Left ventricle myocardium superior (tissue), 1 donor: ENCODE measurements at regions of chr4 and their contacts with region 1.

Region 1: DNA sequence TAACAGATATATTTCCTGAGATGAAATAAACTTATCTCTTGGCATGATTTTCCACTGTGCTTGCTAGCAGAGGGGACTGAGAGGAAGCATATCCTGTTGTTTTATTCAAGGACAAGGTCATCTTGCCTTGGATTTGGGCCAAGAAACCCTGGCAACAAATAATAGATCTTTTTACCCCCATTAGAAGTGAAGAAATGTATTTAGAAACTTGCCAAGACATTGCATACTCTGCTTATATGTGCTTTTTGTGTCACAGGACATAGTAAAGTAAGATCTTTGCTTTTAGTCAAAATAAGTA is 170.2 kb downstream of the RAPGEF2 start:
- DNase-seq: no peak
- ATAC-seq: peak; percentile 65

Region 2: GRCh38 chr4:159341522-159341921 is 68.4 kb after region 1 on chr4:
- intact Hi-C with region 1: loop called (anchors 10 kb)
- DNase-seq: no peak
- ATAC-seq: no peak

Region 3: GRCh38 chr4:159420162-159421057 is 147.3 kb after region 1 on chr4:
- intact Hi-C with region 1: no loop called
- DNase-seq: no peak
- ATAC-seq: no peak